ENCODE measurements at regions of chr18 and their contacts with region 1.

Region 1: GRCh38 chr18:23703057-23703986 is 14.1 kb downstream of the LAMA3 start:
- DNase-seq: peak; percentile 22
- H3K4me3 Mint-ChIP-seq: no peak overlapping the region
- H3K27ac Mint-ChIP-seq: no peak overlapping the region
- H3K4me1 Mint-ChIP-seq: peaks cover 2% of the 10 kb centered on the region
- H3K27me3 Mint-ChIP-seq: peaks cover 47% of the 10 kb centered on the region

Region 2: DNA sequence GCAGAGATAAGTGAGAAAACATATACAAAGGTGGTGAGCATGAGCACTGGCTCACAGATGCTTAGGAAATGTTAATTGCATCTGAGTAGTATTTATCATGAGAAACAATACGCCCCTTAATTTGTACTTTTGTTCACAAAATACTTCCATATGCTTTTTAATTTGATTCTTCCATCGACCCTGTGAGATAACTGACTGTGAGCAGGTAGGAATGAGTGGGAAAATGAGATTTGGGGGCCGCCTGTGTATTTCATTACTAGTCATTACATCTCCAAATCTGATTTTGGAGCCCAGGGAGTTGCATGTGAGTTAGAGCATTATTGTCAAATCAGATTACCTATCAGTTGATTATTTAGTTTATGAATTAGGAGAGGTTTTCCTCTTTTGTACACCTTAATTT is 80.3 kb before region 1 on chr18:
- CTCF ChIA-PET with region 1: interaction called, 32 read pairs
- POLR2A ChIA-PET with region 1: interaction called, 3 read pairs
- DNase-seq: no peak
- H3K4me3 Mint-ChIP-seq: no peak overlapping the region
- H3K27ac Mint-ChIP-seq: no peak overlapping the region
- H3K4me1 Mint-ChIP-seq: peaks cover 19% of the 10 kb centered on the region
- H3K27me3 Mint-ChIP-seq: peaks cover 39% of the 10 kb centered on the region

Region 3: GRCh38 chr18:23629444-23629946 is 73.8 kb before region 1 on chr18:
- CTCF ChIA-PET with region 1: interaction called, 24 read pairs
- POLR2A ChIA-PET with region 1: interaction called, 3 read pairs
- DNase-seq: no peak
- H3K4me3 Mint-ChIP-seq: no peak overlapping the region
- H3K27ac Mint-ChIP-seq: no peak overlapping the region
- H3K4me1 Mint-ChIP-seq: peaks cover 20% of the 10 kb centered on the region
- H3K27me3 Mint-ChIP-seq: peaks cover 14% of the 10 kb centered on the region

Region 4: GRCh38 chr18:23718243-23718720 is 15.0 kb after region 1 on chr18:
- CTCF ChIA-PET with region 1: no interaction called
- POLR2A ChIA-PET with region 1: no interaction called
- DNase-seq: no peak
- H3K4me3 Mint-ChIP-seq: no peak overlapping the region
- H3K27ac Mint-ChIP-seq: no peak overlapping the region
- H3K4me1 Mint-ChIP-seq: peaks cover 3% of the 10 kb centered on the region
- H3K27me3 Mint-ChIP-seq: peaks cover 35% of the 10 kb centered on the region

Region 5: GRCh38 chr18:23844991-23845680 is 141.8 kb after region 1 on chr18:
- CTCF ChIA-PET with region 1: no interaction called
- POLR2A ChIA-PET with region 1: no interaction called
- DNase-seq: no peak
- H3K4me3 Mint-ChIP-seq: no peak overlapping the region
- H3K27ac Mint-ChIP-seq: no peak overlapping the region
- H3K4me1 Mint-ChIP-seq: no peaks in the 10 kb centered on the region
- H3K27me3 Mint-ChIP-seq: no peaks in the 10 kb centered on the region

Measured in activated CD4-positive, alpha-beta memory T cell treated with anti-CD3 and anti-CD28 coated beads, Interleukin-2, amount 10 ng/mL, durations not matched to agents 7 days and 5 days (primary cell).